Natural killer cell (primary cell): ENCODE measurements at regions of chr1 and their contacts with region 1.

Region 1: GRCh38 chr1:235320521-235321179 is 7.3 kb downstream of the ARID4B start:
- DNase-seq: no peak
- ATAC-seq: peak; percentile 5 to 19 (median 8)
- H3K4me3 ChIP-seq: no peak overlapping the region
- H3K4me3 Mint-ChIP-seq: peak overlapping the region; percentile 1
- H3K27ac ChIP-seq: no peak overlapping the region
- H3K27ac Mint-ChIP-seq: peak overlapping the region; percentile 38 to 52
- H3K4me1 ChIP-seq: peaks cover 40% of the 10 kb centered on the region
- H3K4me1 Mint-ChIP-seq: peaks cover 52 to 54% of the 10 kb centered on the region in 2 donors
- H3K27me3 ChIP-seq: no peaks in the 10 kb centered on the region
- H3K27me3 Mint-ChIP-seq: no peaks in the 10 kb centered on the region
- CTCF ChIP-seq: no peak

Region 2: DNA sequence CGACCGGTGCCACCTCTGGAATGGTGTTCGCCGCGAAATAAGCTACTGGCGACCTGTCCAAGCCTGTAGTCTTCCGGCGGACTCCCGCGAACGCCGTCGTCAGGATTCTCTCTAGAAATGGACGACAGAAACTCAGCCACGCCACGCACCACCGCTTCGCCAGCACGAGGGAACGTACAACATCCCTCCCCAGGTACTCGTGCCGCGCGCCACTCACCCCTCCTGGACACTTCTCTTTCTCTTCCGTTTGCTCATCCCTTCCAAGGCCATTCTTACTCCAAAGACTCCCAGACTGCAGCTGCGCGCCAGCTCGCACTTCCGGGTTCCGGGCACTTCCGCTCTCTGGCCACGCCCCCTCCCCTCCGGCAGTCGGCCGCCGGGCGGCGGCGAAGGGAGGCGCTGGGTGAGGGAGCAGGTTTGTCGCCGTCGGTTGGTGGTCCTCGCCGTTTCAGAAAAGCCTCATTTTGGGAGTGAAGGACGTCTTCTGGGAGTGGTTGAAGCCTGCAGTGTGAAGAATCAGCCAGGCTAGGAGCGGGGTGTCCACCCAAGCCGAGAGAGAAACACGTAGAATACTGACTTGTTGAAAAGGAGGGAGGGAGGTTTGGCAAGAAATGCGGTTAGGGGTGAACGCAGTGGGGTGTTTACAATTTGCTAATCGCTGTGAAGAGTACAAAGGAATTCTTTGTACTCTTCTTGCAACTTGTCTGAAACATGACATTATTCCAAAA is 159.5 kb before region 1 on chr1 and contains the start of gene RBM34:
- intact Hi-C with region 1: no loop called
- DNase-seq: peak; percentile 90 to 96
- ATAC-seq: peak; percentile 93 to 98 (median 95)
- H3K4me3 ChIP-seq: peak within 1 kb of the TSS; percentile 80
- H3K4me3 Mint-ChIP-seq: peak within 1 kb of the TSS; percentile 92
- H3K27ac ChIP-seq: peak within 1 kb of the TSS; percentile 81
- H3K27ac Mint-ChIP-seq: peak within 1 kb of the TSS; percentile 96 to 97
- H3K4me1 ChIP-seq: peaks cover 22% of the 10 kb centered on the region
- H3K4me1 Mint-ChIP-seq: peaks cover 18 to 20% of the 10 kb centered on the region in 2 donors
- H3K27me3 ChIP-seq: no peaks in the 10 kb centered on the region
- H3K27me3 Mint-ChIP-seq: no peaks in the 10 kb centered on the region
- CTCF ChIP-seq: no peak
- total RNA-seq, gene RBM34: 163 to 187 (median 180) TPM

Region 3: GRCh38 chr1:235286667-235287066 is 34.0 kb before region 1 on chr1:
- intact Hi-C with region 1: loop called (anchors 5 kb)
- DNase-seq: no peak
- ATAC-seq: peak in 2 of 3 donors; percentile 25 to 37
- H3K4me3 ChIP-seq: no peak overlapping the region
- H3K4me3 Mint-ChIP-seq: peak overlapping the region; percentile 11
- H3K27ac ChIP-seq: no peak overlapping the region
- H3K27ac Mint-ChIP-seq: peak overlapping the region; percentile 67 to 72
- H3K4me1 ChIP-seq: peaks cover 39% of the 10 kb centered on the region
- H3K4me1 Mint-ChIP-seq: peaks cover 63 to 71% of the 10 kb centered on the region in 2 donors
- H3K27me3 ChIP-seq: no peaks in the 10 kb centered on the region
- H3K27me3 Mint-ChIP-seq: no peaks in the 10 kb centered on the region
- CTCF ChIP-seq: no peak

Region 4: DNA sequence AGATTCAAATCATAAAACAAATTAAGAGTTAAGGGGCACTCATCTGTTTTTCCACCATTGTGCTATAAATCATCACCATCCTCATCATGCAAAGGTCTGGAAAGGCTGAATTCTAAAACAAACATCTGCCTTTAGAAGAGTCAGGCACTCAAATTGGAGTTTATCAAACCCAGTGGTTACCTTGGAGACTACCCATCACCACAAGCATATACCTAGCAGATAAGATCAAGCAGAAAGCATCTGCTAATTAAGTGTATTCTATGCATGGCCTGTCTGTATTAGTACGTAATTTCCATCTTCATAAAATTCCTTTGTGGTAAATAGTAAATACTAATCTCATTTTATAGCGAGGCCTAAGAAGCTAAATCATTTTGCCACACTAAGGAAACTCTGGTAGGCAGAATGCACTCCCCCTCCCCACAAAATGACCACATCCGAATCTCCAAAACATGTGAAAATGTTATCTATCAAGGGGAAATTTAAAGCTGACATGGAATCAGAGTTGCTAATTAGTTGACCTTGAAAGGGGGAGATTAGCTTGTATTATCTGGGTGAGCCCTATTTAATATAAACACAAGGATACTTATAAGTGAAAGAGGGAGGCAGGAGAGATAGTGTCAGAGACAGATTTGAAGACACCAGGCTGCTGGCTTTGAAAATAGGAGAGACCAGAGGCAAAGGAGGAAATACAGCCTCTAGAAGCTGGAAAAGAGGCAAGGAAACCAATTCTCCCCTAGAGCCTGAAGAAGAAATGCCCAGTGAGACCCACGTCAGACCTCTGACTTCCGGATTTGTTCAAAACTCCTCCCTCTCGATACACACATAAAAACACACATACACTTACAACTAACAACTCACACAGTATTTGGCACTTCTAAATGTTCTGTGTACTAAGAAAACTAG is 15.8 kb before region 1 on chr1:
- intact Hi-C with region 1: loop called (anchors 2 kb)
- DNase-seq: peak in 1 of 2 donors; percentile 78
- ATAC-seq: peak; percentile 70 to 73 (median 71)
- H3K4me3 ChIP-seq: no peak overlapping the region
- H3K4me3 Mint-ChIP-seq: peak overlapping the region; percentile 82
- H3K27ac ChIP-seq: peak overlapping the region; percentile 77
- H3K27ac Mint-ChIP-seq: peak overlapping the region; percentile 94 to 97
- H3K4me1 ChIP-seq: peaks cover 55% of the 10 kb centered on the region
- H3K4me1 Mint-ChIP-seq: peaks cover 44 to 57% of the 10 kb centered on the region in 2 donors
- H3K27me3 ChIP-seq: no peaks in the 10 kb centered on the region
- H3K27me3 Mint-ChIP-seq: no peaks in the 10 kb centered on the region
- CTCF ChIP-seq: no peak